ENCODE measurements at regions of chr1 and their contacts with region 1.

Region 1: GRCh38 chr1:45557422-45557944 is 6.9 kb downstream of the AKR1A1 start:
- DNase-seq: no peak
- ATAC-seq: no peak
- H3K4me3 ChIP-seq: no peak overlapping the region
- H3K27ac ChIP-seq: peak overlapping the region in 1 of 12 donors; percentile 27
- H3K4me1 ChIP-seq: peaks cover 0 to 16% (median 2%) of the 10 kb centered on the region in 12 donors
- H3K27me3 ChIP-seq: no peaks in the 10 kb centered on the region
- CTCF ChIP-seq: no peak
- POLR2A ChIP-seq: no peak

Region 2: GRCh38 chr1:45359882-45360513 is 197.5 kb before region 1 on chr1:
- intact Hi-C with region 1: loop called in 1 of 10 experiments (anchors 5 kb)
- DNase-seq: peak in 4 of 5 donors; percentile 60 to 77 (median 70)
- ATAC-seq: peak; percentile 70 to 87 (median 84)
- H3K4me3 ChIP-seq: peak overlapping the region in 6 of 12 donors; percentile 1 to 26 (median 16)
- H3K27ac ChIP-seq: peak overlapping the region; percentile 19 to 83 (median 65)
- H3K4me1 ChIP-seq: peaks cover 0 to 21% (median 14%) of the 10 kb centered on the region in 12 donors
- H3K27me3 ChIP-seq: no peaks in the 10 kb centered on the region
- CTCF ChIP-seq: peak; percentile 57 to 86 (median 77)
- POLR2A ChIP-seq: no peak

Region 3: GRCh38 chr1:45608175-45609156 is 51.0 kb after region 1 on chr1:
- intact Hi-C with region 1: no loop called
- DNase-seq: no peak
- ATAC-seq: peak in 1 of 4 donors; percentile 42
- H3K4me3 ChIP-seq: peak overlapping the region in 1 of 12 donors; percentile 33
- H3K27ac ChIP-seq: peak overlapping the region in 2 of 12 donors; percentile 19 to 83
- H3K4me1 ChIP-seq: peaks cover 0 to 33% (median 0%) of the 10 kb centered on the region in 12 donors
- H3K27me3 ChIP-seq: no peaks in the 10 kb centered on the region
- CTCF ChIP-seq: no peak
- POLR2A ChIP-seq: no peak

Measured in heart left ventricle (tissue), 16 donors.